ENCODE measurements at regions of chr12 and their contacts with region 1.

Region 1: GRCh38 chr12:44930972-44931600 is 55.0 kb upstream of the NELL2 start:
- DNase-seq: no peak
- H3K4me3 Mint-ChIP-seq: no peak overlapping the region
- H3K27ac Mint-ChIP-seq: no peak overlapping the region
- H3K4me1 Mint-ChIP-seq: no peaks in the 10 kb centered on the region
- H3K27me3 Mint-ChIP-seq: no peaks in the 10 kb centered on the region

Region 2: GRCh38 chr12:44015335-44015941 is 915.6 kb before region 1 on chr12:
- CTCF ChIA-PET with region 1: interaction called, 13 read pairs
- DNase-seq: no peak
- H3K4me3 Mint-ChIP-seq: no peak overlapping the region
- H3K27ac Mint-ChIP-seq: no peak overlapping the region
- H3K4me1 Mint-ChIP-seq: no peaks in the 10 kb centered on the region
- H3K27me3 Mint-ChIP-seq: no peaks in the 10 kb centered on the region

Region 3: DNA sequence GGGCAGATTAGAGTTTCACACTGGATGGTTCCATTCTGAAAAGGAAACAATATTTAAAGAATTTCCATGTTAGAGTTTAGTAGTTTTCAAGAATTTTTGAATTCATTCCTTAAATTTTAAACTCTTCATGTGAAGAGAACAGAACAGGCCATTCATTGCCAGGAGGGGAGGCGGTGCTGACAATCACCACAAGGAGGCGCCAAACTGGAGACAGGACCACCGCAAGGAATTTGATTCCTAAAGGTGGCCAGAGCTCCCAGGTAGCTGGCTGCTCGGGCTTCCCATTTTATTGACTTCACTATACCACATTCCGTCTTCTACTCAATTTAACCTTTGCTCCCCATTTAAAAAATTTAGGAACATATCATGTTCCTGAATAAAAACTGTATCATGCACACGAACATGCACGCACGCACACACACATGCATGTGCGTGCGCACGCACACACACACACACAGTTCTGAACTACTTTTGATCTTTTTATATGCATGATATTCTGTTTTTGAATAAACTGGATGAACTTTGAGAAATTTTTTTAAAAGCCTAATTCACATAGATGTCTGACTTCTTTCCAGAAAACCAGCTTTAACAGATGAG is 156.2 kb before region 1 on chr12:
- CTCF ChIA-PET with region 1: interaction called, 13 read pairs
- DNase-seq: peak; percentile 71
- H3K4me3 Mint-ChIP-seq: no peak overlapping the region
- H3K27ac Mint-ChIP-seq: no peak overlapping the region
- H3K4me1 Mint-ChIP-seq: no peaks in the 10 kb centered on the region
- H3K27me3 Mint-ChIP-seq: no peaks in the 10 kb centered on the region

Region 4: DNA sequence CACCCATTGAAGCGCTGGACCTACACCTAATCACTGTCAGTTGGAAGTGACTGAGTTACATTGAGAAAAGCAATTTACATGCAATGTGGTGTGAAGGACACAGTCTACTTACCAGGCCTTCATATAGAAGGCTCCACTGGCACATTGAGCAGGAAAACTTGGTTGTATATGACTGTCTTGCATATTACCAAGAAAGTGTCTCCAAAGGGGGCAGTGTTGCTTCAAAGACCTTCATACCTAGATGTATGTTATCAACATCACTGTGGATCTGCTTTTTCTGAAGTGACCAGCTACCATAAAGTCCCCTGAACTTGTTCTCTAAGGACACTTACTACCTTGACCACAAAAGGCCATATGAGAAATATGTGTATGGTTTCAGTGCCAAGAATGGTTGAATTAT is 119.0 kb before region 1 on chr12:
- CTCF ChIA-PET with region 1: interaction called, 31 read pairs
- DNase-seq: peak; percentile 60
- H3K4me3 Mint-ChIP-seq: no peak overlapping the region
- H3K27ac Mint-ChIP-seq: no peak overlapping the region
- H3K4me1 Mint-ChIP-seq: peaks cover 36% of the 10 kb centered on the region
- H3K27me3 Mint-ChIP-seq: no peaks in the 10 kb centered on the region

Measured in activated naive CD4-positive, alpha-beta T cell treated with anti-CD3 and anti-CD28 coated beads, Interleukin-2, amount 10 ng/mL, durations not matched to agents 7 days and 5 days (primary cell).